Activated CD8-positive, alpha-beta T cell treated with anti-CD3 and anti-CD28 coated beads, Interleukin-2, amount 10 ng/mL, durations not matched to agents 7 days and 5 days (primary cell): ENCODE measurements at regions of chr1 and their contacts with region 1.

Region 1: GRCh38 chr1:100866041-100866900 is 28.4 kb downstream of the EXTL2 start:
- DNase-seq: no peak
- ATAC-seq: peak; percentile 49
- H3K4me3 Mint-ChIP-seq: no peak overlapping the region
- H3K27ac Mint-ChIP-seq: no peak overlapping the region
- H3K4me1 Mint-ChIP-seq: no peaks in the 10 kb centered on the region
- H3K27me3 Mint-ChIP-seq: no peaks in the 10 kb centered on the region

Region 2: DNA sequence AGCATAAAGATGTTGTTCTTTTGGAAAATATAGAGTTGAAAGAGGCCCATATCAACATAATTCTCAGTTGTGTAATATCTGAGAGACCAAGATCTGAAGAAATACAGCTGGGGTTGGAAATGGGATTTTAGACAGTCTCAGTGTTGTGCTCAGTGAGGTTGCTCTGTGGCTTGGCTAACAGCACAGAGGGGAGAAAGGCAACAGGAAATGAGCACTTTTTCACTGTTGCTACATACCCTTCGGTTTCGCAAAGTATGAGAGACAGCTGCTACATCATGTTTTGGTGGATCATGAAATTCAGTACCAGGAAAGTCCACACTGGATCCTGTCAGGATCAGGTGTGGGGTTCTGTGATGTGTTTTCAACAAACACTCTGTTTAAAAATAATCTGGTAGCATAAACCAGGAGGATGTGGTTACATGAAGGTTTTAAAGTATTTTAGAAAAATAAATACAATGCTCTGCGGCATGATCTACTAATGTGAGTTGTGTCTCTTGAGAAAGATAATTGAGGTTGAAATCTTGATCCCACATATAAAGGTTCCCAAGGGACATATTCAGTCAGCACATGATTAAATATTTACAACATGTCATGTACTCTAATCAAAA is 335.3 kb before region 1 on chr1:
- CTCF ChIA-PET with region 1: interaction called, 19 read pairs
- POLR2A ChIA-PET with region 1: interaction called, 5 read pairs
- DNase-seq: peak; percentile 61
- ATAC-seq: peak; percentile 95
- H3K4me3 Mint-ChIP-seq: peak overlapping the region; percentile 42
- H3K27ac Mint-ChIP-seq: peak overlapping the region; percentile 76
- H3K4me1 Mint-ChIP-seq: peaks cover 40% of the 10 kb centered on the region
- H3K27me3 Mint-ChIP-seq: peaks cover 18% of the 10 kb centered on the region

Region 3: DNA sequence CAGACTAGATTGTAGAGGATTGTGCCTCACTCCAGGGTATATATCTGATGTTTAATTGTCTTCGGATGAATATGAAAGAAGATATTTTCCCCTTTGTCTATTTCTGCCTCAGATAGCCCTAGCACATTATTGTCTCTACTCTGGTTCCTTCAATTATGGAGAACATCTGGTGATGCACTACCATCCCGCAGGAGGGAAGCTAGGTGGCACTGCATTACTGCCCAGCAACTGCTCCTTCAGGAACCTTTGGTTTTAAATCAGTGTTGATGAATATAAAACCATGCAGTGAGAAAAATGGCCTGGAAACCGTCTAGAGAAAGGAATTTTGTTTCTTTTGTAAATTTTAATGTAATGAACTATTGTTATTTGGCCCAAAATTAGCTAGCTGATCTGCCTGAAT is 259.8 kb before region 1 on chr1:
- CTCF ChIA-PET with region 1: interaction called, 14 read pairs
- POLR2A ChIA-PET with region 1: no interaction called
- DNase-seq: no peak
- ATAC-seq: no peak
- H3K4me3 Mint-ChIP-seq: no peak overlapping the region
- H3K27ac Mint-ChIP-seq: no peak overlapping the region
- H3K4me1 Mint-ChIP-seq: no peaks in the 10 kb centered on the region
- H3K27me3 Mint-ChIP-seq: peaks cover 25% of the 10 kb centered on the region

Region 4: GRCh38 chr1:100699744-100700143 is 166.5 kb before region 1 on chr1:
- CTCF ChIA-PET with region 1: no interaction called
- POLR2A ChIA-PET with region 1: no interaction called
- DNase-seq: no peak
- ATAC-seq: no peak
- H3K4me3 Mint-ChIP-seq: no peak overlapping the region
- H3K27ac Mint-ChIP-seq: no peak overlapping the region
- H3K4me1 Mint-ChIP-seq: no peaks in the 10 kb centered on the region
- H3K27me3 Mint-ChIP-seq: peaks cover 32% of the 10 kb centered on the region

Region 5: GRCh38 chr1:100879422-100879821 is 13.2 kb after region 1 on chr1:
- CTCF ChIA-PET with region 1: interaction called, 18 read pairs
- POLR2A ChIA-PET with region 1: no interaction called
- DNase-seq: no peak
- ATAC-seq: no peak
- H3K4me3 Mint-ChIP-seq: no peak overlapping the region
- H3K27ac Mint-ChIP-seq: no peak overlapping the region
- H3K4me1 Mint-ChIP-seq: no peaks in the 10 kb centered on the region
- H3K27me3 Mint-ChIP-seq: no peaks in the 10 kb centered on the region

Region 6: GRCh38 chr1:100912019-100912418 is 45.7 kb after region 1 on chr1:
- CTCF ChIA-PET with region 1: no interaction called
- POLR2A ChIA-PET with region 1: no interaction called
- DNase-seq: no peak
- ATAC-seq: no peak
- H3K4me3 Mint-ChIP-seq: no peak overlapping the region
- H3K27ac Mint-ChIP-seq: no peak overlapping the region
- H3K4me1 Mint-ChIP-seq: no peaks in the 10 kb centered on the region
- H3K27me3 Mint-ChIP-seq: no peaks in the 10 kb centered on the region